ENCODE measurements at regions of chr9 and their contacts with region 1.

Region 1: DNA sequence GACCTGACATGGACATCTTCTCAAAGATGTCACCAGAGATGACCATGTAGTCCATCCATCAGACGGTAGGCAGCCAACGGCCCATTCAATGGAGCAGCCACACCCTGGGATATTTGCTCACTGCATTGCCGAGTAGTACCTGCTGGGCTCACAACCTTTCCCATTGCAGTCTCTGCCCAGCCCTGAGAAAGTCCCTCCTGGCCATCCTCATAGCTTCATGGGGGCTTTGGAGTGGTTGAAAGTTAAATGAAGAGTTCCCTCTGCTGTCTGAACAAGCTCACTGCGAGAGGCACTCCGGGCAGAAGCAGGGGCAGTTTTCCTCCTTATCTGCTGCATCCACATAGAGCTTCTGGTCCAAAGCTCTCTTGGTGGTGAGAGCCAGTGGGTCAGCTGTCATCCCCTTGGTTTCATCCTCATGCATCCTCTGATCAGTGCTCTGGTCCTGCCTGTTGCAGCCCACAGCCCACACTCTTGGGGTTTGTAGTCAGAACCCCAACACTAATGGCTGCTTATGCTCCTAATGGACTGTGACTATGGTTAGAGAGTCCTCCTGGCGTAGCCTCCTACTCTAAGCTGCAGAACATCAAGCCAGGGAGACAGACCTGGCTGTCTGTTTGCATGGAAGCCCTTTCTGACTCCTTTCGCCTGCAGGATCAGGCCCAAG is 23.4 kb downstream of the TNFSF8 start:
- DNase-seq: no peak
- H3K4me3 Mint-ChIP-seq: peak overlapping the region; percentile 67
- H3K27ac Mint-ChIP-seq: peak overlapping the region; percentile 97
- H3K4me1 Mint-ChIP-seq: peaks cover 55% of the 10 kb centered on the region
- H3K27me3 Mint-ChIP-seq: no peaks in the 10 kb centered on the region

Region 2: GRCh38 chr9:114681594-114682332 is 225.3 kb before region 1 on chr9 and contains the start of gene TEX48:
- intact Hi-C with region 1: loop called (anchors 1 kb)
- DNase-seq: peak; percentile 76
- H3K4me3 Mint-ChIP-seq: peak within 1 kb of the TSS; percentile 49
- H3K27ac Mint-ChIP-seq: peak within 1 kb of the TSS; percentile 97
- H3K4me1 Mint-ChIP-seq: peaks cover 81% of the 10 kb centered on the region
- H3K27me3 Mint-ChIP-seq: no peaks in the 10 kb centered on the region
- total RNA-seq, gene TEX48: 1.0 and 1.2 TPM in 2 replicates

Region 3: DNA sequence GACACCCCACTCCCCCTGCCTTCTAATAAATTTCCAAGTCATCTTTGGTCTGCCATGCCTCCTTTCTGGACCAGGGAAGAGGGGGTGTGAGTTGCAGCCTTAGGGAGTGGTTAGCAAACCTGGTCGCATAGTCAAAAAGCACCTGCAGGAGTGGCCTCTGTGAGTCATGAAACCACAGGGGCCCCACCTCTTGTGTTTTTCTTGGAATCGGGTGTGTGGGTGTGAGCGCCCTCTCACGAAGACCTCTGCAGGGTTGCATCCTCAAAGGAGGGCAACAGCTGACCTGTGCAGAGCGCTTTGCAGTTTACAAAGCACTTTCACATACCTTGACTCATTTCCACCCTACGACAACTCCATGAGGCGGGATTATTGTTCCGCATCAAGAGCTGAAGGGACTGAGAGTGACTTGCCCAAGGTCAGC is 188.2 kb before region 1 on chr9:
- intact Hi-C with region 1: loop called (anchors 1 kb)
- DNase-seq: peak; percentile 94
- H3K4me3 Mint-ChIP-seq: peak overlapping the region; percentile 28
- H3K27ac Mint-ChIP-seq: peak overlapping the region; percentile 98
- H3K4me1 Mint-ChIP-seq: peaks cover 82% of the 10 kb centered on the region
- H3K27me3 Mint-ChIP-seq: peaks cover 2% of the 10 kb centered on the region

Region 4: GRCh38 chr9:114894801-114895433 is 12.1 kb before region 1 on chr9:
- intact Hi-C with region 1: loop called (anchors 1 kb)
- DNase-seq: peak; percentile 54
- H3K4me3 Mint-ChIP-seq: peak overlapping the region; percentile 16
- H3K27ac Mint-ChIP-seq: peak overlapping the region; percentile 90
- H3K4me1 Mint-ChIP-seq: peaks cover 57% of the 10 kb centered on the region
- H3K27me3 Mint-ChIP-seq: no peaks in the 10 kb centered on the region

Region 5: GRCh38 chr9:114988962-114989599 is 82.0 kb after region 1 on chr9:
- intact Hi-C with region 1: loop called (anchors 1 kb)
- DNase-seq: peak; percentile 47
- H3K4me3 Mint-ChIP-seq: peak overlapping the region; percentile 37
- H3K27ac Mint-ChIP-seq: peak overlapping the region; percentile 95
- H3K4me1 Mint-ChIP-seq: peaks cover 87% of the 10 kb centered on the region
- H3K27me3 Mint-ChIP-seq: no peaks in the 10 kb centered on the region

Region 6: DNA sequence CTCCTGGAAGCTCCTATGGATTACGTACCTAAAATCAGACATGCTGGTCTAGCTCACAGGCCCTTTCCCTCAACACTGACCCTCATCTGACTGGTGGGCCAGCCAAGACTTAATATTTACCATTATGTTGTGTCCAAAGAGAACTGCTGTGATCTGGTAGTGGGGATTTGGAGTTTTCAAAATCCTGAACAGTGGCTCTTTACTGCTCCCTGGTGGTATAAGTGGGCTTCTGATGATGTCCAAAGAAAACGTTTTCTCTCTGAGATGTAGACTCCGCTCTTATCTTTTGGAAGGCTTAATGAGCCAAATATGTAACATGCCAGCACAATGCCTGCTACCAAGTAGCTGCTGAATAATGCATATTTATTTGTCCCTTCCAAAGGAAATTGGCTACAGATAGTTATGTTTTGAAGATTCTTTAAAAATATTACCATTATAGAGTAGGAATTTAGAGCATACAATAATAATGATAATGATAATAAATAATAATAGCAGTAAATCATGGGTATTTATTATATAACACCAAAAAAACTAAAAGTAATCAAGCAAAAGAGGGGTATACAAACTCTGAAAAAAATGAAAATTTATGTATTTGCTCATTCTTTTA is 617.5 kb after region 1 on chr9:
- intact Hi-C with region 1: loop called (anchors 10 kb)
- DNase-seq: no peak
- H3K4me3 Mint-ChIP-seq: no peak overlapping the region
- H3K27ac Mint-ChIP-seq: no peak overlapping the region
- H3K4me1 Mint-ChIP-seq: no peaks in the 10 kb centered on the region
- H3K27me3 Mint-ChIP-seq: peaks cover 3% of the 10 kb centered on the region